ENCODE measurements at regions of chr17 and their contacts with region 1.

Region 1: GRCh38 chr17:8103549-8103948 is 14.8 kb downstream of the ALOXE3 start:
- DNase-seq: no peak
- H3K4me3 ChIP-seq: no peak overlapping the region
- H3K27ac ChIP-seq: no peak overlapping the region
- H3K4me1 ChIP-seq: no peaks in the 10 kb centered on the region
- H3K27me3 ChIP-seq: no peaks in the 10 kb centered on the region
- CTCF ChIP-seq: no peak
- EP300 ChIP-seq: no peak
- RAD21 ChIP-seq: no peak

Region 2: GRCh38 chr17:8091033-8091687 is 12.4 kb before region 1 on chr17:
- CTCF ChIA-PET with region 1: interaction called, 298 read pairs
- POLR2A ChIA-PET with region 1: no interaction called
- DNase-seq: no peak
- H3K4me3 ChIP-seq: no peak overlapping the region
- H3K27ac ChIP-seq: no peak overlapping the region
- H3K4me1 ChIP-seq: no peaks in the 10 kb centered on the region
- H3K27me3 ChIP-seq: peaks cover 62% of the 10 kb centered on the region; the same call in 1 of the 2 replicates
- CTCF ChIP-seq: no peak
- EP300 ChIP-seq: no peak
- RAD21 ChIP-seq: no peak

Region 3: GRCh38 chr17:8131844-8132441 is 28.4 kb after region 1 on chr17:
- CTCF ChIA-PET with region 1: no interaction called
- POLR2A ChIA-PET with region 1: no interaction called
- DNase-seq: no peak
- H3K4me3 ChIP-seq: no peak overlapping the region
- H3K27ac ChIP-seq: no peak overlapping the region
- H3K4me1 ChIP-seq: peaks cover 0 to 2% of the 10 kb centered on the region in 2 experiments; a peak in 1 of 4 replicates
- H3K27me3 ChIP-seq: no peaks in the 10 kb centered on the region; the same call in 1 of the 2 replicates
- CTCF ChIP-seq: no peak
- EP300 ChIP-seq: no peak
- RAD21 ChIP-seq: no peak